K562 (cell line): ENCODE measurements at regions of chr5 and their contacts with region 1.

Region 1: GRCh38 chr5:93915142-93915553 is 173.7 kb upstream of the POU5F2 start:
- DNase-seq: peak in 3 of 4 experiments; percentile 5 to 48 (median 5)
- ATAC-seq: no peak
- H3K4me3 ChIP-seq: no peak overlapping the region
- H3K27ac ChIP-seq: no peak overlapping the region
- H3K4me1 ChIP-seq: no peaks in the 10 kb centered on the region
- H3K27me3 ChIP-seq: no peaks in the 10 kb centered on the region
- CTCF ChIP-seq: peak in 2 of 3 experiments; percentile 25 to 46; a peak in 2 of 6 replicates
- EP300 ChIP-seq: no peak
- POLR2A ChIP-seq: no peak
- RAD21 ChIP-seq: peak; percentile 62 to 69

Region 2: GRCh38 chr5:93611976-93612854 is 302.9 kb before region 1 on chr5:
- CTCF ChIA-PET with region 1: no interaction called
- POLR2A ChIA-PET with region 1: no interaction called
- in situ Hi-C with region 1: no loop called
- intact Hi-C with region 1: loop called (anchors 10 kb)
- DNase-seq: peak in 3 of 4 experiments; percentile 28 to 41 (median 36)
- ATAC-seq: no peak
- H3K4me3 ChIP-seq: no peak overlapping the region
- H3K27ac ChIP-seq: no peak overlapping the region
- H3K4me1 ChIP-seq: no peaks in the 10 kb centered on the region
- H3K27me3 ChIP-seq: peaks cover 3 to 6% of the 10 kb centered on the region in 2 experiments; a peak in 3 of 5 replicates
- CTCF ChIP-seq: no peak
- EP300 ChIP-seq: no peak
- POLR2A ChIP-seq: no peak
- RAD21 ChIP-seq: no peak

Region 3: DNA sequence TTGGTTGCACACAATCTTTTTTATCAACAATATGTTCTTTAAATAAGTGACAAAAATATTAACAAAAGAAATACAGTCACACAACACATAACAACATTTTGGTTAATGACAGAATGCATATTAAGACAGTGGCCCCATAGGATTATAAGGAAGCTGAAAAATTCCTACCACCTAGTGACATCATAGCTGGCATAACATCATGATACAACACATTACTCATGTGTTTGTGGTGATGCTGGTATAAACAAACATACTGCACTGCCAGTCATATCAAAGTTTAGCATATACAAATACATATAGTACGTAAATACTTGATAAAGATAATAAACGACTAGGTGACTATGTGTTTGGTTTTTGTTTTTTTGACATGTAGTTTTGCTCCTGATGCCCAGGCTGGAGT is 171.1 kb after region 1 on chr5:
- CTCF ChIA-PET with region 1: no interaction called
- POLR2A ChIA-PET with region 1: no interaction called
- in situ Hi-C with region 1: no loop called
- intact Hi-C with region 1: loop called (anchors 10 kb)
- DNase-seq: no peak
- ATAC-seq: no peak
- H3K4me3 ChIP-seq: no peak overlapping the region
- H3K27ac ChIP-seq: no peak overlapping the region
- H3K4me1 ChIP-seq: no peaks in the 10 kb centered on the region
- H3K27me3 ChIP-seq: no peaks in the 10 kb centered on the region
- CTCF ChIP-seq: no peak
- EP300 ChIP-seq: no peak
- POLR2A ChIP-seq: no peak
- RAD21 ChIP-seq: no peak